PC-3 (cell line): ENCODE measurements at regions of chr12 and their contacts with region 1.

Region 1: GRCh38 chr12:121095544-121096198 is 37.0 kb upstream of the P2RX7 start:
- DNase-seq: peak; percentile 69
- ATAC-seq: peak; percentile 94
- H3K4me3 ChIP-seq: peak overlapping the region; percentile 66
- H3K27ac ChIP-seq: no peak overlapping the region
- H3K4me1 ChIP-seq: peaks cover 6% of the 10 kb centered on the region; the same call in 1 of the 2 replicates
- H3K27me3 ChIP-seq: no peaks in the 10 kb centered on the region
- CTCF ChIP-seq: peak; percentile 82

Region 2: GRCh38 chr12:121005346-121005815 is 90.3 kb before region 1 on chr12:
- CTCF ChIA-PET with region 1: no interaction called
- POLR2A ChIA-PET with region 1: no interaction called
- intact Hi-C with region 1: loop called (anchors 1 kb)
- DNase-seq: peak; percentile 72
- ATAC-seq: peak; percentile 66
- H3K4me3 ChIP-seq: no peak overlapping the region
- H3K27ac ChIP-seq: no peak overlapping the region
- H3K4me1 ChIP-seq: no peaks in the 10 kb centered on the region
- H3K27me3 ChIP-seq: no peaks in the 10 kb centered on the region
- CTCF ChIP-seq: peak; percentile 84

Region 3: GRCh38 chr12:121026274-121027045 is 69.2 kb before region 1 on chr12:
- CTCF ChIA-PET with region 1: no interaction called
- POLR2A ChIA-PET with region 1: no interaction called
- intact Hi-C with region 1: no loop called
- DNase-seq: no peak
- ATAC-seq: peak; percentile 45
- H3K4me3 ChIP-seq: no peak overlapping the region
- H3K27ac ChIP-seq: no peak overlapping the region
- H3K4me1 ChIP-seq: peaks cover 3% of the 10 kb centered on the region; the same call in 1 of the 2 replicates
- H3K27me3 ChIP-seq: no peaks in the 10 kb centered on the region
- CTCF ChIP-seq: no peak; the same call in 1 of the 2 replicates